Heart right ventricle (tissue), 16 donors: ENCODE measurements at regions of chr1 and their contacts with region 1.

Region 1: GRCh38 chr1:5840195-5841001 is 151.8 kb downstream of the NPHP4 start:
- DNase-seq: no peak
- ATAC-seq: no peak
- H3K4me3 ChIP-seq: no peak overlapping the region
- H3K27ac ChIP-seq: no peak overlapping the region
- H3K4me1 ChIP-seq: no peaks in the 10 kb centered on the region
- H3K27me3 ChIP-seq: peaks cover 0 to 48% (median 39%) of the 10 kb centered on the region in 7 donors
- CTCF ChIP-seq: no peak

Region 2: DNA sequence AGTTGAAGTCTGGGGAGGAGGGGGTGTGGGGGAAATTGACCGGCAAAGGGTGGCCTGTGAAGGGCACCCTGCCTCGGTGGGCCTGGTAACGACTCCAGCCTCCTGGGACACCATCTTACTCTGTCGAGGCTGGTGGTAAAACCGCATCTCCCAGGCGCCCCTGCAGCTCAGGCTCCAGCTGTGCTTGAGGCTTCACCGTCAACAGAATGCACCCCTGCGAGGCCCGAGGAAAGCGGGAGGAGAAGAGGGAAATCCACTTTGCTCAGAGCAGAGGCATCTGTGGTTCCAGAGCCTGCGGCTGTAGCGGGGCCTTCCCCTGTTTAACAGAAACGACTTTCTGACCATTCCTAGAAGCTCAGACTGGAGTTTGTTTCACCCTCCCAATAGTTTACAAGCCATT is 13.8 kb before region 1 on chr1:
- intact Hi-C with region 1: loop called in 1 of 10 experiments (anchors 1 kb)
- DNase-seq: no peak
- ATAC-seq: no peak
- H3K4me3 ChIP-seq: no peak overlapping the region
- H3K27ac ChIP-seq: no peak overlapping the region
- H3K4me1 ChIP-seq: no peaks in the 10 kb centered on the region
- H3K27me3 ChIP-seq: peaks cover 0 to 29% (median 19%) of the 10 kb centered on the region in 7 donors
- CTCF ChIP-seq: no peak

Region 3: GRCh38 chr1:6579374-6580118 is 739.1 kb after region 1 on chr1 and contains the start of gene ZBTB48:
- intact Hi-C with region 1: no loop called
- DNase-seq: peak; percentile 99 to 100
- ATAC-seq: peak; percentile 95 to 99 (median 98)
- H3K4me3 ChIP-seq: peak within 1 kb of the TSS; percentile 78 to 98 (median 89)
- H3K27ac ChIP-seq: peak within 1 kb of the TSS; percentile 68 to 97 (median 94)
- H3K4me1 ChIP-seq: peaks cover 18 to 50% (median 40%) of the 10 kb centered on the region in 9 donors
- H3K27me3 ChIP-seq: no peaks in the 10 kb centered on the region
- CTCF ChIP-seq: no peak
- total RNA-seq, gene ZBTB48: 7.3 to 16.6 (median 11.0) TPM